ENCODE measurements at regions of chr1 and their contacts with region 1.

Region 1: DNA sequence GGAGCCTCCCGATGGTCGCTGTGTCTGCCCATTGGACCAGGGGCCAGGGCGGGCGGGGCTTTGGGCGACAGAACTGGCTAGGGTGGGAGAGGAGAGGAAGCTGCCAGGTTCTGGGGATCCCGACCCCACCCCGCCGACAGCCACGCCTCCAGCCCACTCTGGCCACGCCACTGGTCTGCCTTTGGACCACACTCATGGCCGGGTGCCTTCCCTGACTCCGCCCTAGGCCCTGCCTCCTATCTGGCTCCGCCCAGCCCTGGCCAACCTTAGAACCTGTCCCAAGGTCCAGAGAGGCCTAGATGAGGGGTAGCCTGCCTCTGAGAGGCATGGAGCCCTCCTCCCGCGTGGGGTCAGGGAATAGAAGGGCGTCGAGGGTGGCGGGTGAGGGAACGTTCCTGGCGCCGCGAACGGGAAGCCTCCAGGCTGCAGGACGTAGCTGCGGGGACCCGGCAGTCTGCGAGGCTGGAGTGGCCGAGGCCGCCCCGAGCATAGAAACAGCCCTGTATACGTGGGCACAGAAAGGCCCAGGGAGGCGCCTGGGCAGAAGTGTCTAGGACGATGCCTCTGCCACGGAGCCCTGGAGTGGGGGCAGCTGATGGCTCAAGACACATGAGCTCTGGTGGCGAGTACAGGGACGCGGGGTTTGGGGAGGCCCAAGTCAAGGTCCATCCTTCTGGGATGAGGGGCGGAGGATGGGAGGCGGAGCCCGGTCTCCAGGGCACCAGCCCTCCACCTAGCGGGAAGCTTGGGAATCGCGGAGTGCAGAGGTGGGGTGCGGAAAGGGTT is 11.5 kb upstream of the COL16A1 start:
- DNase-seq: peak; percentile 94 to 95
- H3K4me3 ChIP-seq: peak overlapping the region; percentile 30 to 67 (median 58); a peak in 7 of 8 replicates
- H3K27ac ChIP-seq: no peak overlapping the region; the same call in 1 of the 2 replicates
- H3K4me1 ChIP-seq: peaks cover 0 to 5% (median 3%) of the 10 kb centered on the region in 4 experiments; a peak in 4 of 7 replicates
- H3K27me3 ChIP-seq: no peaks in the 10 kb centered on the region; a peak in 1 of 7 replicates
- CTCF ChIP-seq: peak; percentile 82 to 92 (median 89)
- EP300 ChIP-seq: no peak
- POLR2A ChIP-seq: 0 out of 3 replicates have a peak, but pooled peaks of 1 of the 2 experiments have one; percentile 8
- RAD21 ChIP-seq: peak; percentile 47 to 57

Region 2: DNA sequence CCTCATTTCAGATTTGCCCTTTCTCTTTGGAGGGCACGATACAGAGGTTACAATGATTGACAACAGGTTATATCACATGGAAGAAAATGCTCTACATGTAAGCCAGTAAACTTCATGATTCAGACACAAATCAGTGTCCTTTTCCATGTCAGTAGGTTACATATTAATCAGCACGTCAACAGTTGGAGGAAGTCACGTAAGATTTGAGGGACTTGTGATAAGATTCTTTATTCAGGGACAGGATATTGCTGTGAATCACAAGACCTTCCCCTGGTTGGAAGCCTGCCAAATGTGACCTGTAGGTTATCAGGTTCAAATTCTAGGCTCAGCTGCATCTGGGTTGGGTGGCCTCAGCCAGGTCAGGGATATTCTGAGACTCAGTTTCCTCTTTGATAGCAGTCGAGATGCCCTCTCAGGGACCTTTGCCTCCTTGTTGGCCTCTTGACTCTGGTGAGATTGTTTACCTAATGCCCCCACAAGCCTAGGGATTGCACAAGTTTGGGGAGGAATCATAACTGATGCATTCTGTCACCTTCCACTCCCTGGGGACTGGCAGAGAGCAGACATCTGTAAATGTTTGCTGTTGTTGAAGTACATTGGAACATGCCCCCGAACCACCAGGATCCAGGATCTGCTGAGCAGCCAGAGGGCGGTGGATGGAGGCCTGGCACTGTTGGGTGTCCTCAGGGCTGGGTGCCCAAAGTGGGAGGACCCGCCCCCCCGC is 270.4 kb before region 1 on chr1:
- CTCF ChIA-PET with region 1: no interaction called
- POLR2A ChIA-PET with region 1: no interaction called
- DNase-seq: no peak
- H3K4me3 ChIP-seq: no peak overlapping the region
- H3K27ac ChIP-seq: no peak overlapping the region
- H3K4me1 ChIP-seq: no peaks in the 10 kb centered on the region
- H3K27me3 ChIP-seq: no peaks in the 10 kb centered on the region
- CTCF ChIP-seq: no peak
- EP300 ChIP-seq: no peak
- POLR2A ChIP-seq: no peak
- RAD21 ChIP-seq: no peak

Region 3: GRCh38 chr1:31617917-31618660 is 97.2 kb before region 1 on chr1:
- CTCF ChIA-PET with region 1: no interaction called
- POLR2A ChIA-PET with region 1: no interaction called
- DNase-seq: peak in 1 of 2 experiments; percentile 88
- H3K4me3 ChIP-seq: peak overlapping the region; percentile 57 to 88 (median 64)
- H3K27ac ChIP-seq: no peak overlapping the region
- H3K4me1 ChIP-seq: peaks cover 2 to 11% (median 7%) of the 10 kb centered on the region in 4 experiments; a peak in 5 of 7 replicates
- H3K27me3 ChIP-seq: peaks cover 6 to 22% (median 16%) of the 10 kb centered on the region in 4 experiments
- CTCF ChIP-seq: peak; percentile 70 to 83 (median 74)
- EP300 ChIP-seq: no peak
- POLR2A ChIP-seq: no peak
- RAD21 ChIP-seq: peak; percentile 46 to 59; a peak in 3 of 4 replicates

Region 4: GRCh38 chr1:31639543-31639942 is 75.7 kb before region 1 on chr1:
- CTCF ChIA-PET with region 1: interaction called, 11 read pairs
- POLR2A ChIA-PET with region 1: interaction called, 4 read pairs
- DNase-seq: no peak
- H3K4me3 ChIP-seq: no peak overlapping the region
- H3K27ac ChIP-seq: no peak overlapping the region
- H3K4me1 ChIP-seq: peaks cover 3 to 14% (median 6%) of the 10 kb centered on the region in 4 experiments; a peak in 4 of 7 replicates
- H3K27me3 ChIP-seq: no peaks in the 10 kb centered on the region
- CTCF ChIP-seq: no peak
- EP300 ChIP-seq: no peak
- POLR2A ChIP-seq: no peak
- RAD21 ChIP-seq: no peak

Region 5: GRCh38 chr1:31683997-31684396 is 31.3 kb before region 1 on chr1:
- CTCF ChIA-PET with region 1: interaction called, 20 read pairs
- POLR2A ChIA-PET with region 1: no interaction called
- DNase-seq: peak in 1 of 2 experiments; percentile 82
- H3K4me3 ChIP-seq: no peak overlapping the region
- H3K27ac ChIP-seq: no peak overlapping the region
- H3K4me1 ChIP-seq: peaks cover 0 to 1% (median 0%) of the 10 kb centered on the region in 4 experiments; a peak in 2 of 7 replicates
- H3K27me3 ChIP-seq: no peaks in the 10 kb centered on the region
- CTCF ChIP-seq: peak; percentile 72 to 93 (median 84)
- EP300 ChIP-seq: no peak
- POLR2A ChIP-seq: no peak
- RAD21 ChIP-seq: peak; percentile 57 to 66

Region 6: GRCh38 chr1:31699341-31699891 is 15.9 kb before region 1 on chr1:
- CTCF ChIA-PET with region 1: interaction called, 108 read pairs
- POLR2A ChIA-PET with region 1: interaction called, 43 read pairs
- DNase-seq: no peak
- H3K4me3 ChIP-seq: no peak overlapping the region
- H3K27ac ChIP-seq: no peak overlapping the region
- H3K4me1 ChIP-seq: peaks cover 4 to 13% (median 5%) of the 10 kb centered on the region in 4 experiments
- H3K27me3 ChIP-seq: no peaks in the 10 kb centered on the region
- CTCF ChIP-seq: no peak
- EP300 ChIP-seq: no peak
- POLR2A ChIP-seq: no peak
- RAD21 ChIP-seq: no peak

Region 7: DNA sequence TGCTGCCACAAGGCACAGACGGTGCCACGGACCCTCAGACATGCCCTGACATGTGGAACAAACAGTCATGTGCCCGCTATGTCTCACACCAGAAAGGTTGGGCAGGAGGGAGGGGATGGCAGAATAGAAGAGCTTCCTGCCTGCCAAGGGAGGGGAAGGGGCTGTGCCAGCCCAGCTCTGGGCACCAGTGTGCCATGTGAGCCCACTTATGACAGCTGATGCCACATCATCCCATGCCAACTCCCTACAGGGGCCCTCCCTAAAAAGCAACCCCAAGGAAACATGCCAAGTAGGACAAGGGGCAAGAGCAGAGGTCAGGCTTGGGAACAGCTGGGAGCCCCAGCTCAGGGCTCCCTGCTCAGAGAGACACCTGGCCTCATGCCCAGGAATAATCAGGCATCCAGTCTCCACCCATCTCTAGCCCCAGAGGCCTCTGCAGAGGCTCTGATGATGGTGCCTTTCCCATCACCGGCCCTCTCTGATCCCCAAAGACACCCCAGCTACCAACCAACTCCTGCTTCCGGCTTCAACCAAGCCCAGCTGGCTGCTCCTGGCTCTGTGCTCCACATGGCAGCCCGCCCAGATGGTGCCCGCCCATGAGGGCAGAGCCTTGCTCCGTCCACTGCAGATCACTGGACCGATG is 38.5 kb after region 1 on chr1:
- CTCF ChIA-PET with region 1: interaction called, 26 read pairs
- POLR2A ChIA-PET with region 1: interaction called, 6 read pairs
- DNase-seq: no peak
- H3K4me3 ChIP-seq: no peak overlapping the region
- H3K27ac ChIP-seq: no peak overlapping the region
- H3K4me1 ChIP-seq: peaks cover 6 to 23% (median 18%) of the 10 kb centered on the region in 4 experiments
- H3K27me3 ChIP-seq: no peaks in the 10 kb centered on the region
- CTCF ChIP-seq: no peak
- EP300 ChIP-seq: no peak
- POLR2A ChIP-seq: no peak
- RAD21 ChIP-seq: no peak

Region 8: DNA sequence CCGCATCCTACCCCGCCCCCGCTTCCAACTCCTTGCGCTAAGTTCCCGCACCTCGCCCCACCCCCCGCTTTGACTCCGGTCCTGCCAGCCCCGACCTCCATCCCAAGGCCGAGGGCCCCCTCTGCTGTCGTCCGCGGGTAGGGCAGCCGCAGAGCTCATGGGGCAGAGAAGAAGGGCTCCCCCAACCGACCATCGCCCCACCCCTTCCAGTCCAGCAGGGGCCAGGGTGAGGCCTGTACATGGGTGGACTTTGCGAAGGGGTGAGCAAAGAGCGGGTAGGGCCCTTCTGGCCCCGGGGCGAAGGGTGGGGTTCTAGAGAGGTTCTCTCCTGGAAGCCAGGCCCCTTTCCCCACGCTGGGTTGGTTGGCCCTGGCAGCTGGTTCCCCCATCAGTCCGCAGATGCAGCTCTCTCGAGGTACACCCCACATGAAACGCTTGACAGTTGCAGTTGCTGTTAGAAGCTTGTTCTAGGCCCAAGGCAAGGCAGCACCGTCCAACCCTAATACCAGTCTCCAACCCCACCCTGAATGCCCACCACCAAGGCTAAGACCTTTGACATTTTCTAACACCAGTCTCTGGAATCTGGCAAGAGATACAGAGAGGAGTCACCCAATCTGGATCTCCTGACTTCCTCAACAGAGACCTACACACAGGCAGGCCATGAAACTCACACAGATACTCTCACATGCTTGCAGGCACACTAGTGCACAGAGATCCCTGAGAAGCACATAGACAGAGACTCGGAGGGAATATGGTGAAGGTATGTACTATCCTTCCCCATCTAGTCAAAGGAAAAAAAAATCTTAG is 74.2 kb after region 1 on chr1:
- CTCF ChIA-PET with region 1: interaction called, 44 read pairs
- POLR2A ChIA-PET with region 1: no interaction called
- DNase-seq: peak; percentile 60 to 100
- H3K4me3 ChIP-seq: peak overlapping the region; percentile 79 to 89 (median 88); a peak in 6 of 8 replicates
- H3K27ac ChIP-seq: no peak overlapping the region
- H3K4me1 ChIP-seq: peaks cover 3 to 8% (median 4%) of the 10 kb centered on the region in 4 experiments; a peak in 5 of 7 replicates
- H3K27me3 ChIP-seq: no peaks in the 10 kb centered on the region
- CTCF ChIP-seq: peak; percentile 95 to 98 (median 97)
- EP300 ChIP-seq: peak in 1 of 2 experiments; percentile 42; a peak in 1 of 3 replicates
- POLR2A ChIP-seq: no peak
- RAD21 ChIP-seq: peak; percentile 97 to 100